ENCODE measurements at regions of chr1 and their contacts with region 1.

Region 1: DNA sequence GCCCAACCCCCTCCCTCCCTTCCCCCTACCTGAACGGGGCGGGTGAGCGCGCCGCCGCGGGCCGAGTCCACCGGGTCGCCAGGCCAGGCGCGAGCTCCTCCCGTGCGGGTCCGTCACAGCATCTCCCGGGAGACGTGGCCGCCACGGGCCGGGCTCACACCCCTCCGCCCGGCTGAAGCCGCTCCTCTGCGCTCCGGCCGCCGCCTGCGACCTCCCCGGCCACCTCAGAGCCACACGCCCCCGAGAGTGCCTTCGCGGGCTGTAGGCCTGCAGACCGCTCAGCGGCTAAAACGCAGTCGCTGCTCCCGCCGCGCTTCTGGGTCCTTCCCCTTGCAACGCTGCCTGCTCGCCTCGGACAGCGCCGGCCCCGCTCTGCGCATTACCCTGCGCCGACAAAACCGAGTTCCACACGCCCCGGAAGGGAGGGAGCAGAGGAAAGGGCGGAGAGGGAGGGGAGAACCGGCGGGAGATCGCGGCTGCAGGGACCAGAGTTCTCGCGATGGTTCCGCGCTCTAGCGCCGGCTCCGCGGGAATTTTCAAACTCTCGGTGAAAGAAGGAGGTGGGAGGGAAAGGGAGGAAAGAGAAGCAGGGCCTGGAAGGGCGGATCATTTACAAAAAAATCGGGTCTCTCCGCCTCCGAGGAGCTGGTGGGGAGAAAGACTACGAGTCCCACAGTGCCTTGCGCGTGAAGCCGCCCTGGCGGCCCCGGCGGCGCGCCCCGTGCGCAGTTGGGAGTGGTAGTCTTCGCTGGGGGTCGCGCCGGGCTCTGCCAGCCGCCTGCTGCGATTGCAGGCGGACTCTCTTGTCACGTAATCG is at the start of gene AHCTF1:
- DNase-seq: peak; percentile 89
- ATAC-seq: peak; percentile 96
- H3K4me3 ChIP-seq: peak within 1 kb of the TSS; percentile 96
- H3K27ac ChIP-seq: peak within 1 kb of the TSS; percentile 57
- H3K4me1 ChIP-seq: no peaks in the 10 kb centered on the region
- H3K27me3 ChIP-seq: no peaks in the 10 kb centered on the region
- CTCF ChIP-seq: no peak
- EP300 ChIP-seq: no peak
- POLR2A ChIP-seq: peak; percentile 100
- RAD21 ChIP-seq: no peak
- polyA plus RNA-seq, gene AHCTF1: 3.4 to 5.3 TPM

Region 2: GRCh38 chr1:246919902-246920301 is 11.9 kb before region 1 on chr1:
- CTCF ChIA-PET with region 1: interaction called, 4 read pairs
- POLR2A ChIA-PET with region 1: interaction called, 10 read pairs
- RAD21 ChIA-PET with region 1: no interaction called
- SMC1A ChIA-PET with region 1: interaction called, 3 read pairs
- in situ Hi-C with region 1: no loop called
- intact Hi-C with region 1: no loop called
- DNase-seq: no peak
- ATAC-seq: no peak
- H3K4me3 ChIP-seq: no peak overlapping the region
- H3K27ac ChIP-seq: no peak overlapping the region
- H3K4me1 ChIP-seq: no peaks in the 10 kb centered on the region
- H3K27me3 ChIP-seq: no peaks in the 10 kb centered on the region
- CTCF ChIP-seq: no peak
- EP300 ChIP-seq: no peak
- POLR2A ChIP-seq: no peak
- RAD21 ChIP-seq: no peak

Measured in GM12878 (cell line).